ENCODE measurements at regions of chr2 and their contacts with region 1.

Region 1: DNA sequence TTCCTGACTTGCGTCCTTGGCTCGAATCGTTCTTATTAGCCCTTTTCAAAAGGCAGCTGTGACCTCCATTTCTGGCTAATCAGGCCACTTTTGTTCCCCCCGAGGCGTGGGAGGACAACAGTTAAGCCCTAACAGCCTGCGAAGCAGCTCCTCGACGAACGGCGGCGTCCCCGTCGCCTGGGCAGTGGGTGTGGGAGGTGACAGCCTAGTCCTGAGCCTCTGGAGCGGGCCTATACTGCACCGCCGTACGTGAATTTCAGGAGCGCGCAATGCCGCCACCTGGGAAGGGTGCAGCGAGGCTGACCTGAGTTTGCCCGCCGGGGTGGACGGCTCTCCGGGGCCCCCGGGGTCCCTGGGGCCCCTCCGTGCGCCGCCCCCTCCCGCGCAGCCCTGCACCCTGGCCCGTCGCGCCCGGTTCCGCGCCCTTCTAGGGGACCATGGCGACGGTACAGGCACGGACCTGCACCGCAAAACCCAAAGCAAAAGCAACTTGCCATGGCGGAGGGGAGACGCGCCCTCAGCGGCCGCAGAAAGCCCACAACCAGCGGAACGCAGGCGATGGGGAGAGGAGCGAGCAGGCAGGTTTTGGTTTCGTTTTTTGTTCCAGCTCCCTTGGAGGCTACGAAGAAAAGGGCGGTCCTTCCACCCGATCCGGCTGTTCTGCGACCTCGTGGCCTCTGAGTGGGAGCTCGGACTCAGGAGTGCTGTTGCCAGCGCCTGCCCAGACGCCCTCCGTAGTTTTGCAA is at the start of gene RBM43:
- DNase-seq: peak; percentile 88
- H3K4me3 Mint-ChIP-seq: peak within 1 kb of the TSS; percentile 88
- H3K27ac Mint-ChIP-seq: peak within 1 kb of the TSS; percentile 91
- H3K4me1 Mint-ChIP-seq: peaks cover 15% of the 10 kb centered on the region
- H3K27me3 Mint-ChIP-seq: no peaks in the 10 kb centered on the region
- total RNA-seq, gene RBM43: 3.7 to 3.8 TPM

Region 2: DNA sequence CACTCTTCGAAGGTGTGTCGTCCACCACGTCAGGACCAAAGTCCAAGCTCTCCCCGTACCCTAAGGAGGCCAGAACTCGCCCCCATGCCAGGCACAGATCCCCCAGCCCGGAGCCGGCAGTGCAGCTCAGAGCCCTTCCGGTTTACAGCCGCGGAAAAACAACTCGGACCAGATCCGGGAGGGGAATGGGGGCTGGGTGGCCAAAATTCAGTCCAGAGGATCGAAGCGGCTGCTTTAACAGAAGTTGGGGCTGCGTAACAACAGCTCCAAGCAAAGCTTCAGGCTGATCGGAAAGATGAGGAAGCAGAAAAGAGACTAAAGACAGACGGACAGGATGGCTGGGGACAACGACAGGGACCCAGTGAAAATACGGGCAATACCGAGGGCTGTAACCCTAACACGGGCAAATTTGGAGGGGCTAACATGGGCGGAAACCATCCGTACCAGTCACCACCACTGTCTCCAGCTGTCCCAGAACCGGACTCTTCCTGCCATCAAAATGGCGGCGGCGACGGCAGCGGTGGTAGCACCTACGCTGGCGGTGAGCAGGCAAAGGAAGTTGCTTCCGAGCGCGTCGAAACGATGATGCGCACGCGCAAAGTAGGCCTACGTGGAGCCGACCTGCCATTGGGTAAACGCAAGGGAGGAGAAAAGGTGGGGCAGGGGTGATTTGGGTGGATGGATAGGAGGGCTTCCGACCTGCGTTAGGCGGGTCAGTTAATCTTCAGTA is 1674.0 kb before region 1 on chr2 and contains the start of gene MMADHC:
- CTCF ChIA-PET with region 1: interaction called, 3 read pairs
- POLR2A ChIA-PET with region 1: interaction called, 3 read pairs
- intact Hi-C with region 1: loop called (anchors 2 kb)
- DNase-seq: peak; percentile 96
- H3K4me3 Mint-ChIP-seq: peak within 1 kb of the TSS; percentile 98
- H3K27ac Mint-ChIP-seq: peak within 1 kb of the TSS; percentile 97
- H3K4me1 Mint-ChIP-seq: peaks cover 42% of the 10 kb centered on the region
- H3K27me3 Mint-ChIP-seq: peaks cover 11% of the 10 kb centered on the region
- total RNA-seq, gene MMADHC: 130 to 132 TPM

Region 3: GRCh38 chr2:151009437-151010175 is 251.8 kb before region 1 on chr2:
- CTCF ChIA-PET with region 1: no interaction called
- POLR2A ChIA-PET with region 1: no interaction called
- intact Hi-C with region 1: no loop called
- DNase-seq: no peak
- H3K4me3 Mint-ChIP-seq: no peak overlapping the region
- H3K27ac Mint-ChIP-seq: no peak overlapping the region
- H3K4me1 Mint-ChIP-seq: no peaks in the 10 kb centered on the region
- H3K27me3 Mint-ChIP-seq: peaks cover 3% of the 10 kb centered on the region

Region 4: GRCh38 chr2:151230627-151231140 is 30.7 kb before region 1 on chr2:
- CTCF ChIA-PET with region 1: no interaction called
- POLR2A ChIA-PET with region 1: no interaction called
- intact Hi-C with region 1: no loop called
- DNase-seq: no peak
- H3K4me3 Mint-ChIP-seq: no peak overlapping the region
- H3K27ac Mint-ChIP-seq: no peak overlapping the region
- H3K4me1 Mint-ChIP-seq: no peaks in the 10 kb centered on the region
- H3K27me3 Mint-ChIP-seq: peaks cover 14% of the 10 kb centered on the region

Region 5: GRCh38 chr2:151409601-151410484 is 148.4 kb after region 1 on chr2 and contains the start of gene RIF1:
- CTCF ChIA-PET with region 1: no interaction called
- POLR2A ChIA-PET with region 1: interaction called, 5 read pairs
- intact Hi-C with region 1: loop called (anchors 2 kb)
- DNase-seq: peak; percentile 89
- H3K4me3 Mint-ChIP-seq: peak within 1 kb of the TSS; percentile 90
- H3K27ac Mint-ChIP-seq: peak within 1 kb of the TSS; percentile 83
- H3K4me1 Mint-ChIP-seq: peaks cover 24% of the 10 kb centered on the region
- H3K27me3 Mint-ChIP-seq: no peaks in the 10 kb centered on the region
- total RNA-seq, gene RIF1: 56.8 to 59.2 TPM

Measured in activated CD4-positive, alpha-beta memory T cell treated with anti-CD3 and anti-CD28 coated beads for 36 hours (primary cell).